ENCODE measurements at regions of chr19 and their contacts with region 1.

Region 1: DNA sequence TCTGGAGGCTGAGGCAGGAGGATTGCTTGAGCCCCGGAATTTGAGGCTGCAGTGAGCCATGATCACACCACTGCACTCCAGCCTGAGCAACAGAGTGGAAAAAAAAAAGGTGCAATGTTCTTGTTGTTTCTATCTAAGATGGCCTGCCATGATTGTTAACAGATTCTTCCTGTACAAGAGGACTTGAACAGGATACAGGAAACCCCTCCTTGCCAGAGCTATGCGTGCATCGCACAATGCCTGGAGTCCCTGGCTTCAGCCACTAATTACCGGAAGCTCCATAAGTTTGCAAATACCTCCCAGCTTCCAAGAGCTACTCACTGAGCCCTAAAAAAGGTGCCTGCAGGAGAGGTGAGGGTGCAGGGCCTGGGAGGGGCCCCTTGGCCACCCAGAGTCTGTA is 13.1 kb upstream of the HIF3A start:
- DNase-seq: peak; percentile 89
- H3K4me3 ChIP-seq: no peak overlapping the region
- H3K27ac ChIP-seq: peak overlapping the region; percentile 28
- H3K4me1 ChIP-seq: peaks cover 16% of the 10 kb centered on the region
- H3K27me3 ChIP-seq: peaks cover 0 to 4% of the 10 kb centered on the region in 2 experiments
- CTCF ChIP-seq: no peak
- POLR2A ChIP-seq: peak; percentile 62

Region 2: GRCh38 chr19:45952686-45953505 is 330.9 kb before region 1 on chr19:
- CTCF ChIA-PET with region 1: no interaction called
- POLR2A ChIA-PET with region 1: no interaction called
- dilution Hi-C with region 1: no loop called
- intact Hi-C with region 1: no loop called
- DNase-seq: no peak
- H3K4me3 ChIP-seq: no peak overlapping the region
- H3K27ac ChIP-seq: no peak overlapping the region
- H3K4me1 ChIP-seq: peaks cover 28% of the 10 kb centered on the region
- H3K27me3 ChIP-seq: no peaks in the 10 kb centered on the region
- CTCF ChIP-seq: no peak
- POLR2A ChIP-seq: no peak

Region 3: GRCh38 chr19:46256855-46257254 is 26.9 kb before region 1 on chr19:
- CTCF ChIA-PET with region 1: no interaction called
- POLR2A ChIA-PET with region 1: no interaction called
- dilution Hi-C with region 1: no loop called
- intact Hi-C with region 1: no loop called
- DNase-seq: no peak
- H3K4me3 ChIP-seq: no peak overlapping the region
- H3K27ac ChIP-seq: no peak overlapping the region
- H3K4me1 ChIP-seq: no peaks in the 10 kb centered on the region
- H3K27me3 ChIP-seq: peaks cover 8% of the 10 kb centered on the region in 2 experiments
- CTCF ChIP-seq: no peak
- POLR2A ChIP-seq: no peak

Region 4: GRCh38 chr19:46271481-46272197 is 12.1 kb before region 1 on chr19:
- CTCF ChIA-PET with region 1: interaction called, 12 read pairs
- POLR2A ChIA-PET with region 1: no interaction called
- dilution Hi-C with region 1: no loop called
- intact Hi-C with region 1: no loop called
- DNase-seq: peak; percentile 35
- H3K4me3 ChIP-seq: no peak overlapping the region
- H3K27ac ChIP-seq: no peak overlapping the region
- H3K4me1 ChIP-seq: no peaks in the 10 kb centered on the region
- H3K27me3 ChIP-seq: peaks cover 1 to 11% of the 10 kb centered on the region in 2 experiments
- CTCF ChIP-seq: no peak
- POLR2A ChIP-seq: no peak

Region 5: DNA sequence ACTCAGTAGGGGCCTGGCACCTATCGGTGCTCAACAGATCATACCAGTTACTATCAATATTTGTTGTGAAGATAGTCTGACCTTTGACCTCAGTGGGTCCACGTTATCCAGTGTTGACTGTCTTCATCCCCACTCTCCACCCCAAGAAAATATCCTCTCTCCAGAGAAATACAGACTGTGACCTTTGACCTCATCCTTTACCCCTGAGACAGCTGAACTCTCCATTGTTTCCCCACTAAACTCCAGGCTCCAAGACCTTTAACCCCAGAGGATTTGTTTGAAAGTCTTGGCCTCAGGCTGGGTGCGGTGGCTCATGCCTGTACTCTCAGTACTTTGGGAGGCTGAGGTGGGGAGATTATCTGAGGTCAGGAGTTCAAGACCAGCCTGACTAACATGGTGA is 40.5 kb after region 1 on chr19:
- CTCF ChIA-PET with region 1: interaction called, 13 read pairs
- POLR2A ChIA-PET with region 1: no interaction called
- dilution Hi-C with region 1: no loop called
- intact Hi-C with region 1: no loop called
- DNase-seq: no peak
- H3K4me3 ChIP-seq: no peak overlapping the region
- H3K27ac ChIP-seq: no peak overlapping the region
- H3K4me1 ChIP-seq: no peaks in the 10 kb centered on the region
- H3K27me3 ChIP-seq: no peaks in the 10 kb centered on the region
- CTCF ChIP-seq: no peak
- POLR2A ChIP-seq: no peak

Region 6: GRCh38 chr19:46373421-46374359 is 89.9 kb after region 1 on chr19:
- CTCF ChIA-PET with region 1: interaction called, 37 read pairs
- POLR2A ChIA-PET with region 1: no interaction called
- dilution Hi-C with region 1: no loop called
- intact Hi-C with region 1: loop called (anchors 1 kb)
- DNase-seq: peak; percentile 81
- H3K4me3 ChIP-seq: no peak overlapping the region
- H3K27ac ChIP-seq: peak overlapping the region; percentile 82
- H3K4me1 ChIP-seq: peaks cover 34% of the 10 kb centered on the region
- H3K27me3 ChIP-seq: no peaks in the 10 kb centered on the region
- CTCF ChIP-seq: no peak
- POLR2A ChIP-seq: no peak

Region 7: DNA sequence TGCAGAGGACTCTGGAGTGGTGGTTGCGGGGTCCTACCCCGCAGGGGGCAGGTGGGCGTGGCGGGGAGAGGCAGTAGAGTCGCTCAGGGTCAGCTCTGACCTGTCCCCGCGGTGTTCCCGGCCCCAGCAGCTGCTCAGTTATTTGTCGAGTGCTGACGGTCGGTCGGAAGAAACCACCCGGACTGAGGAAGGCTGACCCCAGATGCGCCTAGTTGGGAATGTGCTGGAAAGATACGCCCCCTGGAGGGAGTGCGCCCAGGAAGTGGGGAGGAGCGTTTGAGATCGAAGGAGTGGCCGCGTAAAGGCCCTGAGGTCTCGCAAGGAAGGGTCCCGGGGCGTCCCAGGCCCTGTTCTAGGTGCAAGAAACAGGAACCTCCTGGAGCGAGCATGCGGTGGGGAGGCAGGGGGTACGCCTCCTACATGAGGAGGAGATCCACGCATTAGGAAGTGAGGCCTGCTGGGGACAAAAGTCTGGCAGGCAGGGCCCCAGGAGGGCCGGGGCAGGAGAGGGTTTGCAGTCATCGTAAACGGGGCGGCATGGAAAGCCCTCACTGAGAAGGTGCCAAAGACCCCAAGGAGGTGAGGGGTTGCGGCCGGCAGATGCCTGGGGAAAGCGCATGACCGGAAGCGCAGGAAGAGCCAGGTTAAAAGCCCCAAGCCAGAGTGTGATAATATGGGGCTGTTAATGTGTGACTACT is 120.4 kb after region 1 on chr19:
- CTCF ChIA-PET with region 1: interaction called, 12 read pairs
- POLR2A ChIA-PET with region 1: interaction called, 5 read pairs
- dilution Hi-C with region 1: no loop called
- intact Hi-C with region 1: loop called (anchors 1 kb)
- DNase-seq: no peak
- H3K4me3 ChIP-seq: no peak overlapping the region
- H3K27ac ChIP-seq: no peak overlapping the region
- H3K4me1 ChIP-seq: no peaks in the 10 kb centered on the region
- H3K27me3 ChIP-seq: peaks cover 30 to 31% of the 10 kb centered on the region in 2 experiments
- CTCF ChIP-seq: no peak
- POLR2A ChIP-seq: no peak

Region 8: GRCh38 chr19:46442808-46443450 is 159.2 kb after region 1 on chr19:
- CTCF ChIA-PET with region 1: no interaction called
- POLR2A ChIA-PET with region 1: no interaction called
- dilution Hi-C with region 1: no loop called
- intact Hi-C with region 1: no loop called
- DNase-seq: peak; percentile 59
- H3K4me3 ChIP-seq: no peak overlapping the region
- H3K27ac ChIP-seq: no peak overlapping the region
- H3K4me1 ChIP-seq: peaks cover 2% of the 10 kb centered on the region
- H3K27me3 ChIP-seq: peaks cover 0 to 5% of the 10 kb centered on the region in 2 experiments
- CTCF ChIP-seq: no peak
- POLR2A ChIP-seq: no peak

Region 9: DNA sequence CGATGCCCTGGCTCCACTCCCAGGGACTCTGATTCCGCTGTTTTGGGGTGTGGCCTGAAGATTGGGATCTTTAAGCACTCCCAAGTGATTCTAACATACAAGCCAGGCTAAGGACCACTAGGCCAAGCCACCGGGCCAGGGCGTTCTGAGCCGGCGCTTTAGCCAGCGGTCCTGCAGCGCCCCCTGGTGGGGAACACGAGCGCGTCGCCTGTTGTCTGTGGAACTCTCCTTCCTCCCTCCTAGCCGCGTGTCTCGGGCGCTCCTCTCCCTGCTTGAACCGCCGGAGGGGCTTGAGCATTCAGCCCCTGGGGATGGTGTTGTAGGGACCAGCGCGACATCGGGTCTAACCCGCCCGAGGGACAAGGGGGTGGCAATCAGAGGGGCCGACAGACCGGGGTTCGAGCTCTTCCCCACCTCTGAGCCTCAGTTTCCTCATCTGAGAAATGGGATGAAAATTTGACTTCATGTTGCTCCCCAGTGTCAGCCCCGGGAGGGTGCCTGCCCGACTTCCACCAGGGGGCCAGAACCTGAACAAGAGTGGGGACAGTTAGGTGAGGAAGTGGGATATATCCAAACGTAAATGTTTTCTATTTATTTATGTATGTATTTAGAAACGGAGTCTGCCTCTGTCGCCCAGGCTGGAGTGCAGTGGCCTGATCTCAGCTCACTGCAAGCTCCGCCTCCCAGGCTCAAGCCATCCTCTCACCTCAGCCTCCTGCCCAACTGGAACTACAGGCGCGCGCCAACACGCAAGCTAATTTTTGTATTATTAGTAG is 229.9 kb after region 1 on chr19:
- CTCF ChIA-PET with region 1: interaction called, 10 read pairs
- POLR2A ChIA-PET with region 1: no interaction called
- dilution Hi-C with region 1: no loop called
- intact Hi-C with region 1: loop called (anchors 1 kb)
- DNase-seq: peak; percentile 55
- H3K4me3 ChIP-seq: no peak overlapping the region
- H3K27ac ChIP-seq: no peak overlapping the region
- H3K4me1 ChIP-seq: no peaks in the 10 kb centered on the region
- H3K27me3 ChIP-seq: no peaks in the 10 kb centered on the region
- CTCF ChIP-seq: peak; percentile 82 to 99
- POLR2A ChIP-seq: no peak

Region 10: GRCh38 chr19:46546194-46546896 is 262.6 kb after region 1 on chr19:
- CTCF ChIA-PET with region 1: no interaction called
- POLR2A ChIA-PET with region 1: no interaction called
- dilution Hi-C with region 1: no loop called
- intact Hi-C with region 1: no loop called
- DNase-seq: peak; percentile 15
- H3K4me3 ChIP-seq: no peak overlapping the region
- H3K27ac ChIP-seq: no peak overlapping the region
- H3K4me1 ChIP-seq: no peaks in the 10 kb centered on the region
- H3K27me3 ChIP-seq: peaks cover 0 to 3% of the 10 kb centered on the region in 2 experiments
- CTCF ChIP-seq: no peak
- POLR2A ChIP-seq: no peak

Measured in endothelial cell of umbilical vein (primary cell).